ENCODE measurements at regions of chr19 and their contacts with region 1.

Region 1: GRCh38 chr19:16324384-16325160 is at the start of gene KLF2:
- DNase-seq: peak; percentile 90
- ATAC-seq: peak; percentile 95
- H3K4me3 ChIP-seq: peak within 1 kb of the TSS; percentile 84
- H3K27ac ChIP-seq: peak within 1 kb of the TSS; percentile 9; the same call in 1 of the 2 replicates
- H3K4me1 ChIP-seq: no peaks in the 10 kb centered on the region
- H3K27me3 ChIP-seq: no peaks in the 10 kb centered on the region
- CTCF ChIP-seq: no peak
- total RNA-seq, gene KLF2: 4.8 and 6.6 TPM in 2 replicates

Region 2: DNA sequence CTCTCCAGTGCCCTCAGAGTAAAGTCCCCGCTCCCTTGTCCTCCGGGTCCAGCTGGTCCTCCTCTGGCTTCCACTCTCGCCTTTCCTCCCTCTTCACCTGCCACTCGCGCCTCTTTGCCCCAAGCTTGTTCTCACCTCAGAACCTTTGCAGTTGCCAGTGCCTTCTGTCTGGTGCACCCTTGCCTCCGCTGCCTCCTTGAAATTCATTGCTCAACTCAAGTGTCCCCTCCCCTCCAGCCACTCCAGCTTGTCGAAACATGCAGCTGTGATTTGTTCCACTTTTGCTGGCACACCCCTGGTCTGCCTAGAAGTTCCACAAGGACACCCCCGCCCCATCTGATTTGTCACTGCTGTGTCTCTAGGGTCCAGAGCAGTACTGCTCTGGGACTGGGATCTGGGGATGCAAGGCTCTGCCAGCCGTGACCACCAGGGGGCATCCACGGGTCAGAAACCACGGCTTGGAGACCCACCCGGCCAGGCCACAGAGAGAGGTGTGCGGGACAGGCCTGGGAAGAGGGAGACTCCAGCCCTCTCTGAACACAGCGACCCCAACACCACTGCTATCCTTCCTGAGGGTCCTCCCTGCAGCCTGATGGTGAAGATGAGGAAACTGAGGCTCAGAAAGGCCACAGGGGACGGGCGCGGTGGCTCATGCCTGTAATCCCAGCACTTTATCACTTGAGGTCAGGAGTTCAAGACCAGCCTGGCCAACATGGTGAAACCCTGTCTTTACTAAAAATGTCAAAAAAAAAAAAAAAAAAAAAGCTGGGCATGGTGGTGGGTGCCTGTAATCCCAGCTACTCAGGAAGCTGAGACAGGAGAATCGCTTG is 77.0 kb before region 1 on chr19:
- CTCF ChIA-PET with region 1: no interaction called
- POLR2A ChIA-PET with region 1: no interaction called
- intact Hi-C with region 1: loop called (anchors 1 kb)
- DNase-seq: peak; percentile 87
- ATAC-seq: peak; percentile 99
- H3K4me3 ChIP-seq: no peak overlapping the region
- H3K27ac ChIP-seq: no peak overlapping the region
- H3K4me1 ChIP-seq: no peaks in the 10 kb centered on the region
- H3K27me3 ChIP-seq: no peaks in the 10 kb centered on the region
- CTCF ChIP-seq: peak; percentile 96

Region 3: GRCh38 chr19:16259385-16260159 is 65.0 kb before region 1 on chr19:
- CTCF ChIA-PET with region 1: no interaction called
- POLR2A ChIA-PET with region 1: interaction called, 16 read pairs
- intact Hi-C with region 1: no loop called
- DNase-seq: no peak
- ATAC-seq: no peak
- H3K4me3 ChIP-seq: no peak overlapping the region
- H3K27ac ChIP-seq: no peak overlapping the region
- H3K4me1 ChIP-seq: no peaks in the 10 kb centered on the region
- H3K27me3 ChIP-seq: no peaks in the 10 kb centered on the region
- CTCF ChIP-seq: no peak

Region 4: GRCh38 chr19:16283210-16284061 is 41.1 kb before region 1 on chr19:
- CTCF ChIA-PET with region 1: no interaction called
- POLR2A ChIA-PET with region 1: interaction called, 12 read pairs
- intact Hi-C with region 1: loop called (anchors 1 kb)
- DNase-seq: no peak
- ATAC-seq: no peak
- H3K4me3 ChIP-seq: no peak overlapping the region
- H3K27ac ChIP-seq: no peak overlapping the region
- H3K4me1 ChIP-seq: peaks cover 18% of the 10 kb centered on the region
- H3K27me3 ChIP-seq: no peaks in the 10 kb centered on the region
- CTCF ChIP-seq: no peak

Region 5: DNA sequence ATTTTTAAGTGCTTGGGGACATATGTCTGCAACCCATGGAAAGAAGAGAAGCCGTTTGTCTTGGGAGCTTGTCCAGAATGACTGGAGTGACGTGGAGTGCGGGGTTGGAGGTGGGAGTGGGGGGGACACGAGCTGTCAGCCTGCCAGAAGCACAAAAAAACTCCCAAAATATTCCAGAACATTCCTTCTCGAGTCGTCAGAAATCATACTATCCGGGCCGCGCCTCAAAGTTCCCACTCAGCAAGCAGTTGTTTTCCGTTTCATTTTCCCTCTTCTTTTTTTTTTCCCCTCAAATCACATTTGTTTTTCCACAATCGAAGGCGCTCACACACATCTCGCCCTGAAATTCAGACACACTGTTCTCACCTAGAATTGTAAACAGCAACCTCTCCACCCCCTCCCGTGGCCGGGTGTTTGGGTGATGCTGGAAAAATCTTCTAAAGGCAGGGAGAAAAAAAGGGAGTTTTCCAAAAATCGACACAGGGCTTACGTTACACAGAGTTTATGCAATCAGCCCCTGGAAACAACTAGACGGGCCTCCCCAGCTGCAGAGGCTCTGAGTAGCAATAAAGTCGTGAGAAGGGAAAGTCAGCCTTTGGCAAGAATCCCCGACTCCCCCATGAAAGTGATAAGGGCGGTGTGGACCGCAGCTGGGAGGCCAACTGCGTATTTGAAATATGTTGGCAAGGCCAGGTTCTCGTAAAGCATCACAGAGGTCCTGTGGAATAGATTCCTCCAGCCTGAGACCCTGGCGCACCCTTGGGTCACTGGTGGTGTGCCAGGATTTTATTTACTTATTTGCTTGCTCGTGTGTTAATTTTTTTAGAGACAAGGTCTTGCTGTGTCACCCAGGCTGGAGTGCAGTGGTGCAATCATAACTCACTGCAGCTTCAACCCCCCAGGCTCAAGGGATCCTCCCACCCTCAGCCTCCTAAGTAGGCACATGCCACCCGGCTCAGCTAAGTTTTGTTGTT is 31.2 kb before region 1 on chr19:
- CTCF ChIA-PET with region 1: no interaction called
- POLR2A ChIA-PET with region 1: interaction called, 6 read pairs
- intact Hi-C with region 1: loop called (anchors 2 kb)
- DNase-seq: peak; percentile 90
- ATAC-seq: peak; percentile 82
- H3K4me3 ChIP-seq: peak overlapping the region; percentile 64
- H3K27ac ChIP-seq: peak overlapping the region; percentile 82
- H3K4me1 ChIP-seq: peaks cover 33% of the 10 kb centered on the region
- H3K27me3 ChIP-seq: no peaks in the 10 kb centered on the region
- CTCF ChIP-seq: no peak

Measured in PC-3 (cell line).